HEK293 (cell line): ENCODE measurements at regions of chr14 and their contacts with region 1.

Region 1: DNA sequence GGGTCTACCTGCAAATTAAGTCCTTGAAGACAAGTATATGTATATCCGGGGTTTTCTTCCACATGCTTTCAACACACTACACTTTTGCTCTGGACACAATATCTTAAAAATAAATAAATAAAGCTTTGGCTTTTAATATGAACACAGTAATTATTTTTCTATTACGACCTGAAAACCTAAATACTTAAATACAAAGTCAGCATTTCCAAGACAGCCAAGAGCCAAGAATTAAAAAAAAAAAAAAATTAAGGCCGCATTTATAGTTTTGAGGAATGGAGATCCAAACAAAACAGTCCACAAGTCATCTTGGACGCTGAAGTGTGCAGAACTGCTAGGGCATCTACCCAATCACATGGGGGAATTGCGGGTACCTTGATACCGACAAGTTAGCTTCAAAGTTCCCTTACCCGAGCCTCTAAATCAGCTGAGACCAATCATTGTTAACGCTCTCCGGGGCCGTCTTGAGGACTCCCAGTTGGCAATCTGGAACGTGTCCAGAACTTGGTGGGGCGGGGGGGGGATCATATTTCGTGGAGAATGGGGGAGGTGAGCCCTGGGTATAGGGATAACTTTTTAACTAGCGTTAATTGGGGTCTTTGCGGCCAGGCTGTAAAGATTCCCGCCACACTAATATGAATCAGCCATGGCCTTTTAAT is 731 bp upstream of the PCNX4 start:
- H3K4me3 ChIP-seq: peak overlapping the region; percentile 64
- H3K27ac ChIP-seq: peak overlapping the region; percentile 98
- H3K4me1 ChIP-seq: peaks cover 19% of the 10 kb centered on the region
- CTCF ChIP-seq: no peak

Region 2: GRCh38 chr14:59870277-59871165 is 220.5 kb before region 1 on chr14 and contains the start of gene RTN1:
- CTCF ChIA-PET with region 1: no interaction called
- POLR2A ChIA-PET with region 1: no interaction called
- H3K4me3 ChIP-seq: peak within 1 kb of the TSS; percentile 53
- H3K27ac ChIP-seq: peak within 1 kb of the TSS; percentile 46; the same call in 1 of the 2 replicates
- H3K4me1 ChIP-seq: no peaks in the 10 kb centered on the region
- CTCF ChIP-seq: peak; percentile 69

Region 3: GRCh38 chr14:60079724-60080123 is 11.3 kb before region 1 on chr14:
- CTCF ChIA-PET with region 1: no interaction called
- POLR2A ChIA-PET with region 1: no interaction called
- H3K4me3 ChIP-seq: no peak overlapping the region
- H3K27ac ChIP-seq: no peak overlapping the region
- H3K4me1 ChIP-seq: no peaks in the 10 kb centered on the region
- CTCF ChIP-seq: no peak

Region 4: DNA sequence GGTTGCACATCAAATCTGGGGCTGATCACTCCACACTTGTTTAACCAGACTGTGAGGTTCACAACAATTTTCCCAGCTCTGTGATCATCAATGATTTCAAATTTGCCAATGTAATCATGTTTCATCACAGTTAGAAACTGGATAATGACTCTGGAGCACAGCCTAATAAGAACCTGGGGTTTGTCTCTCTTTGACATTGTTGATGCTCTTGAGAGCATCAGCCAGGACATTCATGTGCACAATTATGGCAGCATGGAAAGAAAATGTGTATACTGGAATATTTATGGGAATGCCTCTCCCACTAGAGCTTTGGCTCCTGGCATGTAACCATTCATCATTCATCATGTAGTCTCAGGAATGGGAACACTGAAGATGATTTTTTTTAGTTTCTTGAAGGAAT is 511.3 kb after region 1 on chr14:
- CTCF ChIA-PET with region 1: no interaction called
- POLR2A ChIA-PET with region 1: interaction called, 12 read pairs
- H3K4me3 ChIP-seq: no peak overlapping the region
- H3K27ac ChIP-seq: no peak overlapping the region
- H3K4me1 ChIP-seq: no peaks in the 10 kb centered on the region
- CTCF ChIP-seq: no peak